ENCODE measurements at regions of chr10 and their contacts with region 1.

Region 1: GRCh38 chr10:61284222-61284890 is 168.8 kb downstream of the TMEM26 start:
- DNase-seq: no peak

Region 2: DNA sequence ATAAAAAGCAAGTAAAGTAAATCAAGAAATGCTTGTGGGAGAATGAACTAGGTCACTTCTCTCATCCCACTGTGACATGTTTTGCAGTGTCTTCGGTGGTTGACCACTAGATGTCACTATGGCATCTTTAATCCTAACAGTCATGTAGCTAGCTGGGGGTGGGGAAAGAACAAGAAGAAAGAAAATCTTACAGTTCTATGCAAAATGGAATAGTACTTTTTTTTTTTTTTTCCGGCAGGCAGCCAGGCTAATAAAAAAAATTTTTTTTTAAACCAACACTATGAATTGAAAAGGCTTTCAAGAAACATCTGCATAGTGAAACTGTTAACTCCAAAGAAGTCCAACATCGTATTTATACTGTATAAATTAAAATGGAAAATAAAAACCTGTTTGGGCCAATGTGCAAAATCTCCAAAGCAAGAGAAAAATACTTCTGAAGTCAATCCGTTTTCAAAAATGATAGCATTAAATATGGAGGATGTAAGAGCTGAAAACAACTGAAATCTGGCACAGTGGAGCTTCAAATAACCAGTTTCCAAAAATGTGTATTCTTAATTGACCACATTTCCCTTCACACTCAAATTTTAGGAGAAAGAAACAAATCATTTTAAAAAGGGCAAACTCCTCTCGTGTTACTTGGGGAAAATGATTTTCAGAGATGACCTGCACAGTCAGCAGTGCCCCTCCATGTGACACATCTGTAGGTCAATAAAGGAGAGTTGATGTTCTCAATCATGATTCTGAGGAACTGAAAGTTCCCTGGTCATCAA is 467.5 kb before region 1 on chr10:
- intact Hi-C with region 1: loop called in 1 of 2 experiments (anchors 10 kb)
- DNase-seq: no peak

Region 3: DNA sequence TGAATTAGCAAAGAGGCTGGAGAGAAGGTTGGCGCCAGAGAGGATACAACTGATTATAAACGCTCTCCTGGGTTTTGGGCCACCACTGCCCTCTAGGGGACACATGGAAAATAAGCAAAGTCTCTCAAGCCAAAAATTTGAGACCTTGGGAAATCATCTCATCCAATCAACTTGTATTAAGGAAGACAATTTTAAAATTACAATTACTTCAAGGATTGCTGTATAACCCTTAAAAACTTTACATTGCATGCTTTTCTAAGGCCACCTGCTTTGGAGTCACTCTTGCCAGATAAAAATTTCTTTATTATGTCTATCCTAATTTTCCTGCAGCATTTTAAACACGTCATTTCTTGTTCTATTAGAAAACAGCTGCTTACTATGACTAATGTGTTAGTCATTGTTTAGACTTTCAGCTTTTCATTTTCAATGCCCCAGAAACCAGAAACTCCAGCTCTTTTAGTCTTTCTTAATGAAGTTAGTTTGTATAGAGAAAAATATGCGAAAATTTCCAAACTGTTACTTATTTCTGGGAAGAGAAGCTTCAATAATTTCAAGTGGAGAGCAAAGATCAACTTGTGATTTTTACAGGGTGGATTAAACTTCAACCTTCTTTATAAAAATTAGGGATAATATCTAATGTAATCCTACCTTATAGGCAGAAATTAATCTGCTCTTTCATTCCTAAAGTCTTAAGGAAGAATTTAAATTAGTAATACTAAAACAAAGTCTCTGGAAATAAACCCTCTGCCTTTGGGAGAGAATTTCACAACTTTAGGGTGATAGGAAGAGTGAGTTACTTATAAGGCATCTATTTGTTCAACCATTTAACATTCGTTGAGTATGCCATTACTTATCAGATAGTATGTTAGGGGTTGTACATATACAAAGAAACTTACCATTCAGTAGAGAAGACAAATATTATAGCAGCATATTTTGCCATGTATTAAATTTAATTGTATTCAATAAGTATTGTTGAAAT is 319.8 kb before region 1 on chr10:
- intact Hi-C with region 1: loop called in 1 of 2 experiments (anchors 10 kb)
- DNase-seq: peak; percentile 82

Region 4: DNA sequence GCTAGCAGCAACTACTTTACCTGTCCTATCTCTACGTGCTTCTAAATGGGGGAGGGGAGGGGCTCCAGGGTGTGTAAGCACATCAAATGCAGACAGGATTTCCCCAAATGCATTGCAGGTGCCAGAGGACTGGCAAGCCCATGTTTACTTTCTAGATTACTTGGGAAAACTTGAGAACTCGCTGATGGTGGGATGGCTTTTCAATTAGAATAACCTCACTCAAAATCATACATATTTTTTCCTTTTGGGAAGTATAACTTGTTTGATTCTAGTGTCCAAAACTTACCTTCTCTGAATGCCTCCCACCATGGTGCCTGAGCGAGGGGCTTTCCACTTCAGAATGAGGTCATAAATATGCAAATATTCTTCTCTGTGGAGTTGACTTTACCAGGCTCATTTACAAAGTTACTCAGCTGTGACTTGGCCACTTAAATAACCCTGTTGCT is 149.1 kb before region 1 on chr10:
- intact Hi-C with region 1: loop called in 1 of 2 experiments (anchors 5 kb)
- DNase-seq: no peak

Region 5: GRCh38 chr10:61159253-61159652 is 125.1 kb before region 1 on chr10:
- intact Hi-C with region 1: loop called in 1 of 2 experiments (anchors 10 kb)
- DNase-seq: no peak

Region 6: DNA sequence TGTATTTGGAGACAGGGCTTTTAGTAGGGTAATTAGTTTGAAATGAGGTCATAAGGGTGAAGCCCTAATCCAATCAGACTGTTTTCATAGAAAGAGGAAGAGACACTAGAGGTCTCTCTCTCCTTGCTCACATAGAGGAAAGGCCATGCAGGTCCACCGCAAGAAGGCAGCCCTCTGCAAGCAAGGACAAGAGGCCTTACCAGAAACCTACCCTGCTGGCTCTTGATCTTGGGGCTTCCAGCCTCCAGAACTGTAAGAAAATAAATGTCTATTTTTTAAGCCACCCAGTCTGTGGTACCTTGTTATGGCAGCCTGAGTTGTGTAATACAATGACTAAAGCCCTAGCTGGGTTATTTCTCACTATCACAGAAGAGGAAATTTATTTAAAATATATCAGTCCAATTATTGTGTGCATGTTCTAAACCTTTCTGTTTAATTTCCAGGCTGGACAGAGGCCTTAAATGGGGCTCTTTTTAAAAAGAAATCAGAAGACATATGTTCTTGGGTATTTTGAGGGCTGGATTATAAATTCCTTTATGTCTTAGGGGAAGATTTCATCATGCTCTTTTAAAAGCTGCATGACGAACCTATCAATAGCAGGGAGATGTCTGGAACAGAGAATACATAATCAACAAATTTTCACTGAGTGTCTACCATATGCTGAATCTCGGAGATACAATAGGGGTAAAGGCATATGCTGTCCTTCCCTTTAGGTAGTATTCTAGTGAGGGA is 181.7 kb after region 1 on chr10:
- intact Hi-C with region 1: no loop called
- DNase-seq: no peak